Sciatic nerve (tissue), 2 donors: ENCODE measurements at regions of chr19 and their contacts with region 1.

Region 1: GRCh38 chr19:29735800-29736199 is 20.7 kb upstream of the C19orf12 start:
- DNase-seq: no peak
- ATAC-seq: no peak

Region 2: DNA sequence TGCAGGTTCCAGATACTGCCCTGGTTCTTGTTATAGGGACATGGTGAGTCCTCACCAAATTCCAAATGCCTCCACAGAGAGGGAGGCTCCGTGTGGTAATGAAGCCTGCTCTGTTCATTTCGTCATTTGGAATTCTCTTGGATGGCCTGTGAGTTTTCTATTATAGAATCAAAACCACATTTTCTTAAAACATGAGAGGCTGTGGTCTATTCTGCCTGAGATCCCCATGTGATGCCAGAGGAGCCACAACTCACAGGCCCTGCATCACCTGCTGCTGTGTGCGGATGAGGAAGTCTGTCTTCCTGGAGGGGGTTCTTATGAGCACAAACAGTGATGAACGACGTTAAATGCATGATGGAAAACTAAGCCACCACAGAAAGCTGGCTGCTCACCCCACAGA is 787.2 kb before region 1 on chr19:
- intact Hi-C with region 1: loop called (anchors 5 kb)
- DNase-seq: no peak
- ATAC-seq: no peak

Region 3: DNA sequence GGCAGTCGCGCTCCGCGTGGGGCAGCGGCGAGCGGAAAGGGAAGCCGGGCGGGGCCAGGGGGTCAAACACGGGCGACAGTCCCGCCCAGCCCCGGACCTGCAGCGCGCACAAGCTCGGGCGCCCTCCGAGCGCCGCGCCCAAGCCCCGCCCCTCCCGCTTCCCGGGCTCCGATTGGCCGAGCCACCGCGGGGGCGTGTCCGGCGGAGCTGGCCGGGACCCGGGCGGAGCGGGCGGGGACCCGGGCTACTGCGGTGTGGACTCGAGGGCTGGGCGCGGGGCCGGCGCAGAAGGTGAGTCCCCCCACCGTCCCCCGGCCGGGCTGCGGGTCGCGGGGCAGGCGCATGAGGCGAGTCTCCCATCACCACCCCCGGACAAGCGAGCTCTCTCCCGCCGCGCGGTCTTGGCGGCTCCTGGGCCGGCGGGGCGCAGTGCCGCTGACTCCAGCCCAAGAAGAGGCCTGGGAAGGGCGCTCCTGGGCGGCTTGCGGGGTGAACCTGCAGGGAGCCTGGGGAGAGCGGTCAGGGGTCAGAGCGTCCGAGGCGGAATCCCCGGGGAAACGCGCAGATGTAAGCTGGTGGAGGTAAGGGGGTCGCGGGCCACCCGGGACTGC is 70.5 kb before region 1 on chr19 and contains the start of gene PLEKHF1:
- intact Hi-C with region 1: no loop called
- DNase-seq: peak; percentile 95
- ATAC-seq: peak; percentile 82
- total RNA-seq, gene PLEKHF1: 30.4 TPM

Region 4: DNA sequence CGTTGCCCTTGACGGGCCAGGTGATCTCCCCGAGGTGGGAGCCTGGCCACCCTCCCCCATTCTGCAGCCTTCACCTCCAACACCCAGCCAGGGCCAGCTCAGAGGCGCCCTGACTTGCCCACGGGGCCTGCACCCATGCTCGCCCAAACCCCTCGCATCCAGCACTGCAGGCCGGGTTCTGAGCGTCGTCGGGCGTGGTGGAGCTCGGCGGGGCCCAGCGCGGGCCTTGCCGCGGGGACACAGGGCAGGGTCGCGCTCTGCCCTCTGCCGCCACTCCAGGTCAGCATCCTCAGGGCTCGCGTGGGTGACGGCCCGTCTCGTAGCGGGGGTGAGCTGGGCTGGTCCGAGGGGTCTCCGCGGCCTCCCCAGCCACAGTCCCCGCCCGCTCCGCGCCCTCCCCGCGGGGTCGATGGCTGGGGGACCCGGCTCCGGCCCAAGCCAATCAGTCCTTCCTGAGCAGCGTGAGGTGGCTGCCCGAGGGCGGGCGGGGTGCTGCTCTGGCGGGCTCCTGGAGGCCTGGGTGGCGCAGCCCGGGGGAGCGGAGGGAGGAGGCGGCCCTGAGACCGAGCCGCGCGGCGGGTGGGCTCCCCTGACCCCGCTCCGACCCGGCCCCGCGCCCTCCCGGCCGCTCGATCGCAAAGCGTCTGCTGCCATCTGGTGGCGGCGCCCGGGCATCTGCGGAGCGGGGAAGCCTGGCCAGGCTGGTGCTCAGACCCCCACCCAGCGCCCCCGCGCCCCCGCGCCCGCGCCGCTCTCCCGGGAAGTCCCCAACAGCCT is 137.4 kb after region 1 on chr19:
- intact Hi-C with region 1: loop called (anchors 2 kb)
- DNase-seq: peak; percentile 80
- ATAC-seq: peak; percentile 67